Esophagus muscularis mucosa (tissue), 4 donors: ENCODE measurements at regions of chr16 and their contacts with region 1.

Region 1: GRCh38 chr16:71453036-71453435 is 9.0 kb downstream of the ZNF23 start:
- DNase-seq: no peak
- H3K4me3 ChIP-seq: no peak overlapping the region
- H3K27ac ChIP-seq: no peak overlapping the region
- H3K4me1 ChIP-seq: no peaks in the 10 kb centered on the region
- H3K27me3 ChIP-seq: no peaks in the 10 kb centered on the region
- CTCF ChIP-seq: no peak
- EP300 ChIP-seq: no peak
- POLR2A ChIP-seq: no peak

Region 2: DNA sequence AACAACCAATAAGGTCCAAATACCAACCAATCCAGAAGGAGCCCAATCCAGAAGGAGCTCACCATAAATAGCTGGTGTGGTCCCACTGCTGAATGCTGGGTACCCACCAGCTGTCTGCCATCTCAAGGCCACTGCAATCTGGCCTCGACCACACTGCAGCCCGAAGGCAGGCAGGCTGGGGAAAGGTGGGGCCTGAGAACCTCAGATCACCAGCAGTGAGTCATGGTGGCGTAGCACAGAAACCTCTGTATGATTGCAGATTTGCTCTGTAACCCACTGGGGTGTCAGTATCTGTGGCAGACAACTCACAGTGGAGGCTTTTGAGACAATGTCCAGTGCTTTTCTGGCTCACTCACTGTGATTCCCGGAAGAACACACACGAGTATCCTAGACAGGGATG is 149.1 kb before region 1 on chr16:
- intact Hi-C with region 1: no loop called
- DNase-seq: no peak
- H3K4me3 ChIP-seq: no peak overlapping the region
- H3K27ac ChIP-seq: no peak overlapping the region
- H3K4me1 ChIP-seq: no peaks in the 10 kb centered on the region
- H3K27me3 ChIP-seq: peaks cover 0 to 13% (median 0%) of the 10 kb centered on the region in 4 donors
- CTCF ChIP-seq: no peak
- EP300 ChIP-seq: no peak
- POLR2A ChIP-seq: no peak

Region 3: DNA sequence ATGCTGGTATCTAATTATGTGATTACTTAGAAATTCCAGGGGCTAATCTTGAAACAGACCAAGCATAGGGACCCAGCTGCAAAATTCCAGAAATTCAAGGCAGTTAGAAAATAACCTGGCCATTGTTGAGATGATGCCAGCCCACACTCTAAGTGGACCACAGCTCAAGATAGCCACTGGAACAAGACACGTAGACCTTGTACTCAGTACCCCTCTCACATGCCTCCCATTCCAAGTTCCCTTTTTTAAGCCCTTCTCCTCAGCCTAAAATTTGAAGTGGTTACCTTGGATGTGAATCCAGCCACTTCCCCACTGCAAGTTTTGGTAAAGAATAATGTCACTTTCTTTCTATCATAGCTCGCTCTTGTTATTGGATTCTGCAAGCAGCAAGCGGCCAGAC is 40.2 kb after region 1 on chr16:
- intact Hi-C with region 1: loop called (anchors 5 kb)
- DNase-seq: no peak
- H3K4me3 ChIP-seq: no peak overlapping the region
- H3K27ac ChIP-seq: no peak overlapping the region
- H3K4me1 ChIP-seq: no peaks in the 10 kb centered on the region
- H3K27me3 ChIP-seq: no peaks in the 10 kb centered on the region
- CTCF ChIP-seq: no peak
- EP300 ChIP-seq: no peak
- POLR2A ChIP-seq: no peak